ENCODE measurements at regions of chr18 and their contacts with region 1.

Region 1: GRCh38 chr18:47204908-47205522 is 28.9 kb upstream of the IER3IP1 start:
- DNase-seq: peak; percentile 59
- ATAC-seq: no peak
- H3K4me3 Mint-ChIP-seq: no peak overlapping the region
- H3K27ac Mint-ChIP-seq: no peak overlapping the region
- H3K4me1 Mint-ChIP-seq: no peaks in the 10 kb centered on the region
- H3K27me3 Mint-ChIP-seq: peaks cover 7% of the 10 kb centered on the region

Region 2: DNA sequence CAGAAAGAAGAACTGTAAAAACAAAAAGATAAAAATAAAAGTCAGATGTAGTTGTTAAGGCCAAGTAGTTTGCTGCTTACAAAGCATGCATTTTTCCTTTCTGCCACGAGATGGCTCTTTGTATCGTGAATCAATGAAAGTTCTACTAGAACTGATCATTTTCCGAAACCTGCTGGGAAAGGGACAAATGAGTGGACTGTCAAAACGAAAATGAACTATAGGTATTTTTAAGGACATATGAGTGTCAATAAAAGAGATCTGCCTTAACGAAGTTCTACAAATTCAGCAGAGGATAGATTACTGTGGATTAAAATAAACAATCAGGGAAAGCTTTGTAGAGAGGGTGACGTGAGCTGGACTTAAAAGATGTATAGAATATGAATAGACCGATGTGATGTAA is 154.5 kb before region 1 on chr18:
- CTCF ChIA-PET with region 1: interaction called, 7 read pairs
- POLR2A ChIA-PET with region 1: no interaction called
- intact Hi-C with region 1: loop called (anchors 2 kb)
- DNase-seq: peak; percentile 10
- ATAC-seq: peak; percentile 47
- H3K4me3 Mint-ChIP-seq: no peak overlapping the region
- H3K27ac Mint-ChIP-seq: no peak overlapping the region
- H3K4me1 Mint-ChIP-seq: no peaks in the 10 kb centered on the region
- H3K27me3 Mint-ChIP-seq: peaks cover 3% of the 10 kb centered on the region

Region 3: DNA sequence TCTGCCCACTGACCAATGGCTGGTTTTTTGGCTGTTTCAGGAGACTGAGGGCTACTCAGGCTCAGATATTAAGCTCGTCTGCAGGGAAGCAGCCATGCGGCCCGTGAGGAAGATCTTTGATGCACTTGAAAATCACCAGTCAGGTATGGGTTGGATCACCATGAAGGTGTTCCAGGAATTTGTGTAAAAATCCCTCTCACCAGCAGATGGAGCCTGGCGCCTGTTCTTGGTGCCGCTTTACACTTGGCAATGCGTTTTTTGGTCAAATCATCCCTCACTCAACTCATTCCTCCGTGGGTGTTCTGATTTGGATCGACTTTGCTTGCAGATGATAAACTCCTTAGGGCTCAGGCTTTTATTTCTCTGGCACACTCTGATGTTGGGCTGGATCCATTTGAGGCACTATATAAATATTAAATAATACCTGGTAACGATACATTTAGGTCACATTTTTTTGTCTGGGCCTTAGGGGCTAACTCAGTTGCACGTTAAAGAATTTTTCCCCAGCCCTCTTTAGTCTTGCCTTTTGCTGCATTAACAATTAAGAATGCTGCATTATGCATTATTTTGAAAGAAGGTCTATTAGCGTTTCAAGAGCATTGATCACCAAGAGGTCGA is 104.7 kb before region 1 on chr18:
- CTCF ChIA-PET with region 1: interaction called, 32 read pairs
- POLR2A ChIA-PET with region 1: no interaction called
- intact Hi-C with region 1: loop called (anchors 1 kb)
- DNase-seq: peak; percentile 78
- ATAC-seq: peak; percentile 77
- H3K4me3 Mint-ChIP-seq: no peak overlapping the region
- H3K27ac Mint-ChIP-seq: no peak overlapping the region
- H3K4me1 Mint-ChIP-seq: no peaks in the 10 kb centered on the region
- H3K27me3 Mint-ChIP-seq: no peaks in the 10 kb centered on the region

Region 4: DNA sequence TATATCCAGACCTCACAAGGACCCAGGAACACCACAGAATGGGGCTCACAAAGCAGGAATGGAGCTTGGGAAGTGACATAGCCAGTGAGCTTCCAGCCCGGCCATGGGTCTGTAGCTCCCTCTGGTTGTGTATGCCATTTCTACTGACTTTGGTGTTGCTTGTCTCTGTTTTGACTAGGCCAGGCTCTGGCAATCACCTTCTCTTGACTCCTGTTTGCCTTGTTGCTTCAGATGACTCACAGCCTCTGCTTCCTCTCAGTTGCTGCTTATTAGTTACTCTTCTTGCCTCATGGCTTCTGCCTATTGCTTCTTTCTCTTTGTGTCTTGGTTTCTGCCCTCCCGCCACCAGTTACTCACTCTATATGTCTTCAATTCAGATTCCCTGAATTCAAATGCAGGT is 13.1 kb before region 1 on chr18:
- CTCF ChIA-PET with region 1: interaction called, 12 read pairs
- POLR2A ChIA-PET with region 1: no interaction called
- intact Hi-C with region 1: no loop called
- DNase-seq: peak; percentile 12
- ATAC-seq: peak; percentile 69
- H3K4me3 Mint-ChIP-seq: no peak overlapping the region
- H3K27ac Mint-ChIP-seq: no peak overlapping the region
- H3K4me1 Mint-ChIP-seq: no peaks in the 10 kb centered on the region
- H3K27me3 Mint-ChIP-seq: peaks cover 27% of the 10 kb centered on the region

Region 5: DNA sequence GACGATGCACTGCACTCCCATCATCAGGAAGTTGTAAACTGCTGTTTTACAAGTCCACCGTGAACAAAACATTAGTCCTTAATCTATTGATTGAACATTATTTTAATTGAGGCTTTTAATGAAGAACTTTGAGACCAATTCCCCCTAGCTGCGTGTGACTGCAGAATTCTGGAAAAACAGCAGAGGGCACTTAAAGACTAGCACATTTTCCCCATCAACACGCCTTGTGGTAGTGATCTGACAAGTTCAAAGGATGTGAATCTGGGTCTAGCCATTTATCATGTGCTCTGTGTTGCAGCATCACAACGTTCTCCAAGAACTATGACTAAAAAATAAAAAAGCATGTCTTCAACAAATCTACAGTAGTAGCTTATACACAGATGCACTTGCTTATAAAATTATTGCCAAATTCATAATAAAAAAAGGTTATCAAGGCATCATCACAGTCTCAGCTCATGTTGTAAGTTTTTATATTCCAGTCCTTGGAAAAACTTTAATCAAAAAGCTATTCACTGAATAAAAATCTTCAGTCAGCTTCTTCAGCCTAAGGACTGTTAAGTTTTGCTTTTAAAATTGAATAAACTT is 10.6 kb after region 1 on chr18:
- CTCF ChIA-PET with region 1: interaction called, 10 read pairs
- POLR2A ChIA-PET with region 1: no interaction called
- intact Hi-C with region 1: no loop called
- DNase-seq: peak; percentile 26
- ATAC-seq: peak; percentile 71
- H3K4me3 Mint-ChIP-seq: no peak overlapping the region
- H3K27ac Mint-ChIP-seq: no peak overlapping the region
- H3K4me1 Mint-ChIP-seq: no peaks in the 10 kb centered on the region
- H3K27me3 Mint-ChIP-seq: peaks cover 42% of the 10 kb centered on the region